Heart right ventricle (tissue), 16 donors: ENCODE measurements at regions of chr17 and their contacts with region 1.

Region 1: GRCh38 chr17:37037590-37038155 is 88.9 kb downstream of the AATF start:
- DNase-seq: no peak
- ATAC-seq: no peak
- H3K4me3 ChIP-seq: no peak overlapping the region
- H3K27ac ChIP-seq: no peak overlapping the region
- H3K4me1 ChIP-seq: no peaks in the 10 kb centered on the region
- H3K27me3 ChIP-seq: no peaks in the 10 kb centered on the region
- CTCF ChIP-seq: no peak

Region 2: GRCh38 chr17:36978810-36979564 is 58.7 kb before region 1 on chr17:
- intact Hi-C with region 1: loop called in 1 of 10 experiments (anchors 10 kb)
- DNase-seq: no peak
- ATAC-seq: no peak
- H3K4me3 ChIP-seq: no peak overlapping the region
- H3K27ac ChIP-seq: no peak overlapping the region
- H3K4me1 ChIP-seq: peaks cover 0 to 18% (median 8%) of the 10 kb centered on the region in 9 donors
- H3K27me3 ChIP-seq: no peaks in the 10 kb centered on the region
- CTCF ChIP-seq: no peak

Region 3: DNA sequence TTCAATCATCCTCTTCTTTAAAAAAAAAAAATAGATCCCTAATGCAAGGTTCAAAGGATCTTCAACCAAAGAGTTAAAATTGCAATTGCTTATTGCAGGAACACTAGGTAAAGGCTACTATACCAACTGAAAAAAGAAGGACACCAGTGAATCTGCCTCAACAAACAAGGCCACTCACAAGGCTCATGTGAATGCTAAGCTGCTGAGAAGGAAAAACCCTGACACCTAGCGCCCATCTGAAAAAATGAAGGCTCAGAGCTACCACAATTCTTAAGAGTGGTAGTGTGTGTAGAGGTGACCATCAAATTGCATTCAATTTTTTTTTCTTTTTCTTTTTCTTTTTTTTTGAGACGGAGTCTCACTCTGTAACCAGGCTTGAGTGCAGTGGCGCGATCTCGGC is 136.5 kb after region 1 on chr17:
- intact Hi-C with region 1: no loop called
- DNase-seq: no peak
- ATAC-seq: no peak
- H3K4me3 ChIP-seq: no peak overlapping the region
- H3K27ac ChIP-seq: no peak overlapping the region
- H3K4me1 ChIP-seq: no peaks in the 10 kb centered on the region
- H3K27me3 ChIP-seq: no peaks in the 10 kb centered on the region
- CTCF ChIP-seq: peak in 3 of 9 donors; percentile 17 to 34 (median 19)

Region 4: DNA sequence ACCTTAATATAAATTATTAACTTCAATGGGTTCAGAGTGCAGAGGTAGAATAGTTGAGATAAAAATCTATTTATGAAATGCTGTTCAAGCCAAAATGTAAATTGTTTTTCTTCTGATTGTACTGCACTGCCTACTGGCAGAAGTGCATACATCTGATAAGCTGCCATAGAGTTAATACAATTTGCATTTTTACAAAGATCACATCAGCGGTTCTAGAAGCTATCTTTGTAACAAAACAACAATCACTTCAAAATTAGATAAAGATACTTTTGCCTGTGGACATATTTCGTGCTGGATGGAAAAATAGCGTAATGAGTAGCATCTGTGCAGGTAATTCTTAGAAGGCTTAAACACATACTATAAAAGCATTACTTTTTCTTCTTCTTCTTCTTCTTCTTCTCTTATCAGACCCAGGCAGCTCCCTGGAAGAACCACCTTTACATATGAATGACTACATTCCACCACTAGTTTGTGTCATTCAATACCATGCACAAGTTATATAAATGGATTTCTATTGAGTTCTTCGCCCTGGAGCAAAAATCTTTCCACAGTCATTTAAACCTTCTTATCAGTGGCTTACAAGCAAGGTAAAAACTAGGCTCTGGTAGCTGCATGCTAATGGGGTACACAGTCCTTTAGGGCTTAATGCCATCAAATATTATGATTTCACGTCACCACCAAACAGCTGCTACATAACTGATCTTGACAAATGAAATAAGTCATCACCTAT is 524.5 kb after region 1 on chr17:
- intact Hi-C with region 1: no loop called
- DNase-seq: no peak
- ATAC-seq: no peak
- H3K4me3 ChIP-seq: no peak overlapping the region
- H3K27ac ChIP-seq: no peak overlapping the region
- H3K4me1 ChIP-seq: no peaks in the 10 kb centered on the region
- H3K27me3 ChIP-seq: no peaks in the 10 kb centered on the region
- CTCF ChIP-seq: no peak